HepG2 (cell line): ENCODE measurements at regions of chr1 and their contacts with region 1.

Region 1: DNA sequence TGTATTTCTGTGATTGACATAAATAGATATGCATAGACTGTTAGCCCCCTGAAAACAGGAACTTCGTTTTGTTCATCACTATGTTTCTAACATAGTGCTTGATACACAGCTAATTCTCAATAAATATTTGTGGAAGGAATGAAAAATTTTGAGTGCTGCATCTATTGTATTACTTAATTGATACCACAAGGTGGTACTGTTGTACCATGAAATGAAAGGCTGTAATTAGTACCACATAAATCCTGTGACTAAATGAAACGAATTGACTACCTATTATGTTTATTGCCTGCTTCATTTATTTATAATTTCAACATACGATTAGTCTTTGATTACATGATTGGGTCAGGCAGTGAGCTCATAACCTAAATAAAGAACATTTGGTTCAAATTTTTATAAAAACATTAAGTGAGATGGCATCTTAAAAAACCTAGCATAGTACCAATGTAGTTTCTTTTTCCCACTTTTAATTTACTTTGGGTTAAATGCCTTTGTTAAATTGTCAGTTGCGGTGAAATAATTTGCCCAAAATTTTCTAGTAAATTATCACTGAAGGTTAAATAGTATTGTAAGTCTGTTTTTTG is 15.0 kb upstream of the TGFB2 start:
- DNase-seq: peak; percentile 16
- ATAC-seq: no peak; the same call in 2 of the 3 replicates
- H3K4me3 ChIP-seq: no peak overlapping the region
- H3K27ac ChIP-seq: no peak overlapping the region
- H3K4me1 ChIP-seq: no peaks in the 10 kb centered on the region
- H3K27me3 ChIP-seq: no peaks in the 10 kb centered on the region; a peak in 1 of 5 replicates
- CTCF ChIP-seq: peak; percentile 56
- EP300 ChIP-seq: no peak
- POLR2A ChIP-seq: no peak
- RAD21 ChIP-seq: no peak; the same call in 1 of the 2 replicates

Region 2: DNA sequence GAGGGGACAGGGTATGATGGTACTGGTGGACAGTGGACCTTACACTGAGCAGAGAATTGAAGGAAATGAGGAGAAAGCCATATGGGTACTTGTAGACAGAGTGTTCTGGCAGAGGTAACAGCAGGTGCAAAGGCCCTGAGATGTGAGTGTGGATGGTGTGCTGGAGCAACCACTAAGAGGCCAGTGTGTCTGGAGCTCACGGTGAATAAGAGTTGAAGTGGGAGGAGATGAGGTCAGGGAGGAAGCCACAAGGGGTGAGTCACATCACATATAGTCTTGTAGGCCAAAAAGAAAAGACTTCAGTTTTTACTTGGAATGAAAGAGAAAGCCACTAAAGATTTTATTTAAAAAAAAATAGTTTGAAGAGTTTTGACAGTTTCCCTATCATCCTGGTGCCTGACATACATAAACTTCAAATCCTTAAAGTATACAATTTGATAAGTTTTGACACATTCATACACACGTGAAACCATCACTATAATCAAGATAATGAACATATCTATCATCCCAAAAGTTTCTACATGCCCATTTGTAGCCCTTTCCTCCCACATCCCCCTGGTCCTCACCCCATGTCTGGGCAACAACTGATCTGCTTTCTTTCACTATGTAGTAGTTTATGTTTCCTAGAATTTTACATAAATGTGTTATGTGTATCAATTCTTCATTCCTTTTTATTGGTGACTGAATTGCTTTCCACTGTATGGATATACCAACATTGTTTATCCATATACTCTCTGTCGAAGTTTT is 847.6 kb before region 1 on chr1:
- CTCF ChIA-PET with region 1: no interaction called
- POLR2A ChIA-PET with region 1: no interaction called
- in situ Hi-C with region 1: no loop called
- intact Hi-C with region 1: no loop called
- DNase-seq: no peak
- ATAC-seq: no peak
- H3K4me3 ChIP-seq: no peak overlapping the region
- H3K27ac ChIP-seq: no peak overlapping the region
- H3K4me1 ChIP-seq: no peaks in the 10 kb centered on the region
- H3K27me3 ChIP-seq: no peaks in the 10 kb centered on the region
- CTCF ChIP-seq: no peak
- EP300 ChIP-seq: no peak
- POLR2A ChIP-seq: no peak
- RAD21 ChIP-seq: no peak

Region 3: DNA sequence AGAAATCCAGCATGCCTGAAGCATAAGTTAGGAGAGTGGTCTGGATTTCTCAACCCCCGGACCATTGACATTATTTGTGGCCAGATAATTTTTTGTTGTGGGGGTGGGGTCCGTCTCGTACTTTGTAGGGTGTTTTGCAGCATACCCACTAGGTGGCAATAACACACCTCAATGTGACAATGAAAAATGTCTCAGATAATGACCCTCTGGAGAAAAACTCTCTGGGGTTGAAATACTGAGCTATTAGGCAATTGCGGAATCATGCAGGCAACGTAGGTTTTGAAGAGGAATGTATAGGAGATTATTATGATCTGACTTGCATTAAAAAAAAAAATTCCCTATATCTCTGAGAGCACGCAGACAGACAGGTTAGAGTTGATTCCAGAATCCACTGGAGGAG is 70.3 kb before region 1 on chr1:
- CTCF ChIA-PET with region 1: no interaction called
- POLR2A ChIA-PET with region 1: no interaction called
- in situ Hi-C with region 1: no loop called
- intact Hi-C with region 1: loop called (anchors 2 kb)
- DNase-seq: peak; percentile 7
- ATAC-seq: peak; percentile 78
- H3K4me3 ChIP-seq: no peak overlapping the region
- H3K27ac ChIP-seq: no peak overlapping the region
- H3K4me1 ChIP-seq: peaks cover 16% of the 10 kb centered on the region
- H3K27me3 ChIP-seq: no peaks in the 10 kb centered on the region
- CTCF ChIP-seq: peak; percentile 54
- EP300 ChIP-seq: no peak
- POLR2A ChIP-seq: no peak
- RAD21 ChIP-seq: no peak

Region 4: DNA sequence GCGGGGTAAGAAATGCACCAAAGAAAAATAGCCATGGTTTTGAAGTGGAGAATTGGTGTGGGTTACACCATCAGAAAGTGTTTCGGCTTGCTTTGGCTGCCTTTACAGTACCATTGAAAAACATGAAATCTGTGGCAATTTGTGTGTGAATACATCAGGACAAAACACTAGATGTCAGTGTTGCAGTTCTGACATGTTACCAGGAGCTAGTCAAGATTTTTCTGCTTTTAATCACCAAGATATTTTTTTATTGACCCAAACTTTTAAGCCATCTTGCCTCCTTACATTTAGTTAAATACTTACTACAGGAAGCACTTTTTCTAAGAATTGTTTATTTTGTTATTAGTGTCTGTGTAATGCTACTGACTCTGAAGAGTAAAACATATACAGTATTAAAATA is 30.7 kb before region 1 on chr1:
- CTCF ChIA-PET with region 1: no interaction called
- POLR2A ChIA-PET with region 1: no interaction called
- in situ Hi-C with region 1: no loop called
- intact Hi-C with region 1: no loop called
- DNase-seq: peak; percentile 12
- ATAC-seq: peak; percentile 73
- H3K4me3 ChIP-seq: no peak overlapping the region
- H3K27ac ChIP-seq: no peak overlapping the region
- H3K4me1 ChIP-seq: no peaks in the 10 kb centered on the region
- H3K27me3 ChIP-seq: no peaks in the 10 kb centered on the region
- CTCF ChIP-seq: peak; percentile 54
- EP300 ChIP-seq: no peak
- POLR2A ChIP-seq: no peak
- RAD21 ChIP-seq: no peak

Region 5: DNA sequence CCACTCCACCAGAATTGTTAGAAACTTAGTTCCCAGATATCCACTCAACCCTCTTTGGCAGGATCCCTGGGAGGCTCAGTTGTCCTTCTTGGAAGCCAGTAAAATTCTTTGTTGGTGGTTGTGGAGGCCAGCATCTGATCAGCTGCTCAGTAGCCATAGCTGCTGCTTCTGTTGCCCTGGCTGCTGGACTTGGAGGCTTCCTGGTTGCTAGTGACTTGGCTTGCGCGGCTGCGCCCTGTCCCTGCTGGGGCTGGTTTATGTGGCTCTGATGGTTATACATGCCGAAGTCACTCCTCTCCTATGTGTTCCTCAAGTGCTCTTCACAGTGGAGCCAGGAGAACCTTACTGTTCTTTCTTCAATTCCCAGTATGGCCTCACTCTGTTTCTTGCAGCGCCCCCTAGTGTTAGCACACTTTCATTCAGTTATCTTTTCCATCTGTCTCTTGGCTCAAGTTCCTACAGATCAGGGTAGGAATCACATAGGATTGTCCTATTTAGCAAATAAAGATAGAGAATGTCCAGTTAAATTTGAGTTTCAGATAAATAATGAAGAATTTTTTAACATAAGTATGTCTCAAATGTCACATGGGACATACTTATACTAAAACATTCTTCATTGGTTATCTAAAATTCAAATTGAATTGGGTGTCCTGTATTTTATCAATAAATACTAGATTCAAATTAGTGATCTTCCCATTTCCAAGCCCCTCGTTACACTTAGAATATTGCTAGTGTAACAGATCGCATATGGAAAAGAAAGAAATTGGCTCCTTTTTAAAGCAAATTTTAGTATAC is 191.4 kb after region 1 on chr1:
- CTCF ChIA-PET with region 1: interaction called, 4 read pairs
- POLR2A ChIA-PET with region 1: no interaction called
- in situ Hi-C with region 1: no loop called
- intact Hi-C with region 1: loop called (anchors 1 kb)
- DNase-seq: peak; percentile 45
- ATAC-seq: peak; percentile 81
- H3K4me3 ChIP-seq: no peak overlapping the region
- H3K27ac ChIP-seq: no peak overlapping the region
- H3K4me1 ChIP-seq: no peaks in the 10 kb centered on the region
- H3K27me3 ChIP-seq: no peaks in the 10 kb centered on the region
- CTCF ChIP-seq: peak; percentile 79
- EP300 ChIP-seq: no peak
- POLR2A ChIP-seq: no peak
- RAD21 ChIP-seq: no peak

Region 6: GRCh38 chr1:218553203-218553602 is 223.1 kb after region 1 on chr1:
- CTCF ChIA-PET with region 1: no interaction called
- POLR2A ChIA-PET with region 1: no interaction called
- in situ Hi-C with region 1: no loop called
- intact Hi-C with region 1: loop called (anchors 1 kb)
- DNase-seq: no peak
- ATAC-seq: no peak; the same call in 2 of the 3 replicates
- H3K4me3 ChIP-seq: no peak overlapping the region
- H3K27ac ChIP-seq: no peak overlapping the region
- H3K4me1 ChIP-seq: no peaks in the 10 kb centered on the region
- H3K27me3 ChIP-seq: no peaks in the 10 kb centered on the region
- CTCF ChIP-seq: peak; percentile 45
- EP300 ChIP-seq: no peak
- POLR2A ChIP-seq: no peak
- RAD21 ChIP-seq: no peak

Region 7: DNA sequence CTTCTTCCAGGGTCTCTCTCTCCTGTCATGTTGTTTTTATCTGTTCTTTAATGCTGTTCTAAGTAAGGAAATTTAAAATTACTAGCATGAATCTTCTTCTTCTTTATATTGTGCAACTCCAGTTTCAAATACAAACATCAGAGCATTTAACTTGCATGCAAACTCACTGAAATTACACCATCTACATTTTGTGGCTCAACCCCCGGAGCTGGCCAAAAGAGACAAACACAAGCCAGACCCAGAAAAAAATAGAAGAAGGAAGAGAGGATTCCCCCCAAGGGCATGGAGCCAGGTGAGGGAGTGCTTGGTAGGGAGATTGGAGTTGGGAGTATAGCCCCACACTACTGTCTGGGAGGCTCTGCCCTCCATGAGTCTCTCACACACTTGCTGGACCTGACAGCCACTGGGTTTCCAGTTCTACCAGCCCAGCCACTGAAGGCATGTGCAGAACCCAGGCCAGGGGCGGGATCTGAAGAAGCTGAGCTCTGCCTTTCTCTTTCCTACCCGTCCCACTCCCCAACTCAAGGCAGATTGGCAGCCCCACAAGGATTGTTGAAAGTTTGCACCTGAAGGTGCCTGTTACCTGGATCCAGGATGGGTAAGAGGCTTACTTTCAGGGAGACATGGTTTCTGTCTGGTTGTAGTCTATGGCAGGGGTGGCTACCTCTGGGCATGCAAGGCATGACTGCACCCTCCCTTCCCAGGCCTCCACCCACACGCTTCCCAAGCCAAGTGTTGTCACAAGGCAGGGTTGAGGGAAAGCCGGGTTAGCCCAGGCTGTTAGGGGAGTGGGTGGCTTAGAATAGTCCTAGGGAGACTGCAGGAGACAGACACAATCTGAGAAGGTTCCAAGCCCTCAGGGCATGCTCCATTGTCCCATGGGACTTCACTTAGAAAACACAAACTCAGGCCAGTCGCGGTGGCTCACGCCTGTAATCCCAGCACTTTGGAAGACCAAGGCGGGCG is 312.2 kb after region 1 on chr1:
- CTCF ChIA-PET with region 1: no interaction called
- POLR2A ChIA-PET with region 1: no interaction called
- in situ Hi-C with region 1: no loop called
- intact Hi-C with region 1: loop called (anchors 10 kb)
- DNase-seq: no peak
- ATAC-seq: no peak; the same call in 2 of the 3 replicates
- H3K4me3 ChIP-seq: no peak overlapping the region
- H3K27ac ChIP-seq: no peak overlapping the region
- H3K4me1 ChIP-seq: peaks cover 15% of the 10 kb centered on the region
- H3K27me3 ChIP-seq: no peaks in the 10 kb centered on the region
- CTCF ChIP-seq: no peak
- EP300 ChIP-seq: no peak
- POLR2A ChIP-seq: no peak
- RAD21 ChIP-seq: no peak

Region 8: DNA sequence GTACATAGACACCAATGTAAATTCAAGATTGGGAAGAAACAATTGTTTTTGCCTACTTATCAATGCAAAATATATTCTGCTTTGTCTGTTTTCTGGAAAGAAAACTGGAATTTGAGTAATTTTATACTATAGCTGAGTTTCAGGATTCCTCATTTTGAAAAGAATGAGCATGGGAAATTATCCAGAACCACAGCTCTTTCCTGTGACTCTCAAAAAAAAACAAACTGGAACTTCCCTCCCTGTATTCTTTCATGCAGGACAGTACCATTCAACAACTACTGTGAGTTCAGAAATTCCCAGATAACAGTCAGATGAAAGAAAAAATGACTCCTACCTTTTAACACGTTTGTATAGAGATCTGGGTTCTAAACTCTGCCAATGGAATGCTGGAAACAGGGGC is 387.4 kb after region 1 on chr1:
- CTCF ChIA-PET with region 1: no interaction called
- POLR2A ChIA-PET with region 1: no interaction called
- in situ Hi-C with region 1: no loop called
- intact Hi-C with region 1: no loop called
- DNase-seq: no peak
- ATAC-seq: no peak
- H3K4me3 ChIP-seq: no peak overlapping the region
- H3K27ac ChIP-seq: no peak overlapping the region
- H3K4me1 ChIP-seq: no peaks in the 10 kb centered on the region
- H3K27me3 ChIP-seq: no peaks in the 10 kb centered on the region
- CTCF ChIP-seq: no peak
- EP300 ChIP-seq: no peak
- POLR2A ChIP-seq: no peak
- RAD21 ChIP-seq: no peak

Region 9: DNA sequence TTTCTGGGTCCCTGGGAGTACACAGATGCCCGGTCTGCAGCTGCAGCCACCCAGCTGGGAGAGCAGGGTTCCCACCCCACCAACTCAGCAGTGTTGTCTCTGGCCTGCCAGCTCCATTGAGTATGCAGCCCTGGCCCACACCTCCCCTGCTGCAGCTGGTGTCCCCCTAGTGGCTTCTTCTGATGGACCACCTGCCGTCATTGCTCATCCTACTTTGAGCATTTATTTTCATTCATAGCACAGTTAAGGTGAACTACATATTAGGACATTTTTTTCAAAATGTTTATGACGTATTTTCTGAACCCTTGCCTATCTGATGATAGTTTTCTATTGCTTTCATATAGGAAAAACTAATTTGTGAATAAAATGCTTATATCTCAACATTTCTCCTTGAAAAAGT is 653.8 kb after region 1 on chr1:
- CTCF ChIA-PET with region 1: no interaction called
- POLR2A ChIA-PET with region 1: no interaction called
- in situ Hi-C with region 1: loop called (anchors 25 kb)
- intact Hi-C with region 1: loop called (anchors 5 kb)
- DNase-seq: peak; percentile 19
- ATAC-seq: peak; percentile 100
- H3K4me3 ChIP-seq: no peak overlapping the region
- H3K27ac ChIP-seq: no peak overlapping the region
- H3K4me1 ChIP-seq: no peaks in the 10 kb centered on the region
- H3K27me3 ChIP-seq: no peaks in the 10 kb centered on the region
- CTCF ChIP-seq: peak; percentile 56
- EP300 ChIP-seq: no peak
- POLR2A ChIP-seq: no peak
- RAD21 ChIP-seq: no peak

Region 10: GRCh38 chr1:219566951-219567947 is 1237.1 kb after region 1 on chr1:
- CTCF ChIA-PET with region 1: no interaction called
- POLR2A ChIA-PET with region 1: no interaction called
- in situ Hi-C with region 1: loop called (anchors 10 kb)
- intact Hi-C with region 1: loop called (anchors 5 kb)
- DNase-seq: peak; percentile 20
- ATAC-seq: peak; percentile 57; the same call in 2 of the 3 replicates
- H3K4me3 ChIP-seq: no peak overlapping the region
- H3K27ac ChIP-seq: no peak overlapping the region
- H3K4me1 ChIP-seq: peaks cover 15% of the 10 kb centered on the region
- H3K27me3 ChIP-seq: no peaks in the 10 kb centered on the region; a peak in 1 of 5 replicates
- CTCF ChIP-seq: peak; percentile 64
- EP300 ChIP-seq: no peak
- POLR2A ChIP-seq: no peak
- RAD21 ChIP-seq: no peak